ENCODE measurements at regions of chr12 and their contacts with region 1.

Region 1: GRCh38 chr12:949453-950191 is at the start of gene RAD52:
- DNase-seq: peak; percentile 97
- ATAC-seq: peak; percentile 85
- H3K4me3 Mint-ChIP-seq: peak within 1 kb of the TSS; percentile 99
- H3K27ac Mint-ChIP-seq: peak within 1 kb of the TSS; percentile 96
- H3K4me1 Mint-ChIP-seq: peaks cover 26% of the 10 kb centered on the region
- H3K27me3 Mint-ChIP-seq: no peaks in the 10 kb centered on the region
- CTCF ChIP-seq: peak; percentile 65
- total RNA-seq, gene RAD52: 15.0 and 15.2 TPM in 2 replicates

Region 2: GRCh38 chr12:569803-570434 is 379.7 kb before region 1 on chr12:
- CTCF ChIA-PET with region 1: interaction called, 11 read pairs
- POLR2A ChIA-PET with region 1: interaction called, 7 read pairs
- intact Hi-C with region 1: loop called (anchors 1 kb)
- DNase-seq: peak; percentile 84
- ATAC-seq: peak; percentile 98
- H3K4me3 Mint-ChIP-seq: peak overlapping the region; percentile 81
- H3K27ac Mint-ChIP-seq: no peak overlapping the region
- H3K4me1 Mint-ChIP-seq: peaks cover 4% of the 10 kb centered on the region
- H3K27me3 Mint-ChIP-seq: no peaks in the 10 kb centered on the region
- CTCF ChIP-seq: no peak

Region 3: GRCh38 chr12:823028-823698 is 126.5 kb before region 1 on chr12:
- CTCF ChIA-PET with region 1: no interaction called
- POLR2A ChIA-PET with region 1: no interaction called
- intact Hi-C with region 1: loop called (anchors 1 kb)
- DNase-seq: no peak
- ATAC-seq: peak; percentile 98
- H3K4me3 Mint-ChIP-seq: peak overlapping the region; percentile 3
- H3K27ac Mint-ChIP-seq: peak overlapping the region; percentile 79
- H3K4me1 Mint-ChIP-seq: peaks cover 49% of the 10 kb centered on the region
- H3K27me3 Mint-ChIP-seq: no peaks in the 10 kb centered on the region
- CTCF ChIP-seq: no peak

Region 4: DNA sequence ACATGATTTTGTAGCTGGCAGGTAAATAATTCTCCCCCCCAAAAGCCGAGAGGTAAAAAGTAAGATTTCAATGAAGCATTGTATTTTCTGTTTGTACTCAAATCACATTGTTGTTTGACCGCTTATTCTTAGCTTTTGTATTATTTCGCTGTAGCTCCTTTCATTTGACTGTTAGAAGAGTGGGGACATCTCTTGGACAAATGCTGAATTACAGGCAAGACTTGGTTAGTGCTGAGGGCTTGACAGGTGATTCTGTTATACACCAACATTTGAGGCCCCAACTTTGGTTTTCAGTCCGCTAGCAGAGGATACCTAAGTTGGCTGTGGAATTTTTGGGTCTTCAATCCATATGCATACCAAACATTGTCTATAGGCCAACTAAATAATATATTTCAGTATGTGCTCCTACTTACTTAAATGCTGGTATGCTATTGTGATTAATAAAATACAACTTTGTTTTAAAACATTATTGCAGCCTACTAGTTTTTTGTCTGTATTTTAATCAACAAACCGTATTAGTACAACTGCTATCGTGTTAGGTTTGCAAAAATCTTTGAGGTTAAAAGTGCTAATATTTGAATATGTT is 143.6 kb after region 1 on chr12:
- CTCF ChIA-PET with region 1: interaction called, 7 read pairs
- POLR2A ChIA-PET with region 1: interaction called, 5 read pairs
- intact Hi-C with region 1: loop called (anchors 5 kb)
- DNase-seq: no peak
- ATAC-seq: peak; percentile 80
- H3K4me3 Mint-ChIP-seq: no peak overlapping the region
- H3K27ac Mint-ChIP-seq: no peak overlapping the region
- H3K4me1 Mint-ChIP-seq: peaks cover 2% of the 10 kb centered on the region
- H3K27me3 Mint-ChIP-seq: no peaks in the 10 kb centered on the region
- CTCF ChIP-seq: no peak

Region 5: GRCh38 chr12:1250641-1251040 is 301.0 kb after region 1 on chr12:
- CTCF ChIA-PET with region 1: no interaction called
- POLR2A ChIA-PET with region 1: no interaction called
- intact Hi-C with region 1: no loop called
- DNase-seq: no peak
- ATAC-seq: no peak
- H3K4me3 Mint-ChIP-seq: no peak overlapping the region
- H3K27ac Mint-ChIP-seq: no peak overlapping the region
- H3K4me1 Mint-ChIP-seq: no peaks in the 10 kb centered on the region
- H3K27me3 Mint-ChIP-seq: no peaks in the 10 kb centered on the region
- CTCF ChIP-seq: no peak

Region 6: DNA sequence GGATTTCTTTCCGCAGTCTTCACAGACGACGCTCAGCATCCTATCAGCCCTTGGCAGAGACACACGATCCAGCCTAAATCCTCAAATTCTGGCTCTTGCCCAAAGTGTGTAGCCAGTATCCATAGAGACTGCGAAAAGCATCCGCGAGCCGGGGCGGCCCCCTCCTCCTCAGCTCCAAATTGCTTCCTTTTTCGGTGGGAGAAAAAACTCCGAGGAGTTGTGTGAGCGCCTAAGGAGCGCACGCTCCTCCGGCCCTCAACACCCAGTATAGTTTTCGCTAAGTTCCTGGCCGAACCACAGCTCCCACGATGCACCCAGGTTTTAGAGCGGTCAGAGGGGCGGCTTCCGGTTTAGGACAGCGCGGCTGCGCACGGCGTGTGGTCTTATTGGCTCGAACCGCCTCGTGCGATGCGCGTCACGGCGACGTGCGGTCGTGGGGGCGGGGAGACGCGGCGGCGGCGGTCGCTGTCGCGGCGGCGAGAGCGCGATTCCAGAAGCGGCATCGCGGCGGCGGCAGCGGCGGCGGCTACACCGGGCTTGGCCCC is 741.0 kb after region 1 on chr12 and contains the start of gene ADIPOR2:
- CTCF ChIA-PET with region 1: no interaction called
- POLR2A ChIA-PET with region 1: interaction called, 5 read pairs
- intact Hi-C with region 1: loop called (anchors 2 kb)
- DNase-seq: peak; percentile 94
- ATAC-seq: peak; percentile 96
- H3K4me3 Mint-ChIP-seq: peak within 1 kb of the TSS; percentile 88
- H3K27ac Mint-ChIP-seq: peak within 1 kb of the TSS; percentile 98
- H3K4me1 Mint-ChIP-seq: peaks cover 39% of the 10 kb centered on the region
- H3K27me3 Mint-ChIP-seq: peaks cover 5% of the 10 kb centered on the region
- CTCF ChIP-seq: no peak
- total RNA-seq, gene ADIPOR2: 43.0 and 43.1 TPM in 2 replicates